MCF 10A (cell line): ENCODE measurements at regions of chr18 and their contacts with region 1.

Region 1: DNA sequence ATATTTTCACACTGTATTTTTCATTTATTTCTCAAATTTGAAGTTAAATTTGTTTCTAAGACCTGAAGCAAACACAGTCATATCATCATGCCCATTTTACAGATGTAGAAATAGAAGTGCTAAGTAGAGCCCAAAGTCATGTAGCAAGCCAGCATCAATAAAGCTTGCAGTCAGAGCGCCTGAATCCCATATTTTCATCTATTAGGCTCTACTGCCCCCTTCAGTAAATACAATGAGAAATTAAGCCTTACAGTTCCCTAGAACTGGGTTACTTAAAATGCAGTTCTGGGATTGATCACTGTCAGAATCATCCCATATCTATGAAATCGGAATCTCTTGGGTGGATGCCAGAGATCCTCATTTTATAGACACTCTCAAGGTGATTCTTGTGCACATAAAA is 419.9 kb downstream of the TGIF1 start:
- DNase-seq: peak; percentile 68
- H3K4me3 Mint-ChIP-seq: no peak overlapping the region
- H3K27ac Mint-ChIP-seq: no peak overlapping the region
- H3K4me1 Mint-ChIP-seq: no peaks in the 10 kb centered on the region
- H3K27me3 Mint-ChIP-seq: peaks cover 21% of the 10 kb centered on the region
- CTCF ChIP-seq: peak; percentile 65

Region 2: GRCh38 chr18:3281456-3282400 is 588.1 kb before region 1 on chr18:
- CTCF ChIA-PET with region 1: interaction called, 3 read pairs
- POLR2A ChIA-PET with region 1: no interaction called
- intact Hi-C with region 1: loop called (anchors 1 kb)
- DNase-seq: peak; percentile 80
- H3K4me3 Mint-ChIP-seq: no peak overlapping the region
- H3K27ac Mint-ChIP-seq: no peak overlapping the region
- H3K4me1 Mint-ChIP-seq: peaks cover 6% of the 10 kb centered on the region
- H3K27me3 Mint-ChIP-seq: no peaks in the 10 kb centered on the region
- CTCF ChIP-seq: peak; percentile 52

Region 3: GRCh38 chr18:3652380-3653262 is 217.2 kb before region 1 on chr18:
- CTCF ChIA-PET with region 1: no interaction called
- POLR2A ChIA-PET with region 1: no interaction called
- intact Hi-C with region 1: no loop called
- DNase-seq: peak; percentile 99
- H3K4me3 Mint-ChIP-seq: peak overlapping the region; percentile 4
- H3K27ac Mint-ChIP-seq: peak overlapping the region; percentile 91
- H3K4me1 Mint-ChIP-seq: peaks cover 41% of the 10 kb centered on the region
- H3K27me3 Mint-ChIP-seq: no peaks in the 10 kb centered on the region
- CTCF ChIP-seq: peak; percentile 13

Region 4: GRCh38 chr18:3703732-3704176 is 166.1 kb before region 1 on chr18:
- CTCF ChIA-PET with region 1: interaction called, 99 read pairs
- POLR2A ChIA-PET with region 1: interaction called, 3 read pairs
- intact Hi-C with region 1: loop called (anchors 1 kb)
- DNase-seq: peak; percentile 66
- H3K4me3 Mint-ChIP-seq: no peak overlapping the region
- H3K27ac Mint-ChIP-seq: no peak overlapping the region
- H3K4me1 Mint-ChIP-seq: peaks cover 9% of the 10 kb centered on the region
- H3K27me3 Mint-ChIP-seq: no peaks in the 10 kb centered on the region
- CTCF ChIP-seq: peak; percentile 61

Region 5: GRCh38 chr18:3709205-3709604 is 160.6 kb before region 1 on chr18:
- CTCF ChIA-PET with region 1: interaction called, 99 read pairs
- POLR2A ChIA-PET with region 1: interaction called, 4 read pairs
- intact Hi-C with region 1: no loop called
- DNase-seq: no peak
- H3K4me3 Mint-ChIP-seq: no peak overlapping the region
- H3K27ac Mint-ChIP-seq: no peak overlapping the region
- H3K4me1 Mint-ChIP-seq: peaks cover 8% of the 10 kb centered on the region
- H3K27me3 Mint-ChIP-seq: no peaks in the 10 kb centered on the region
- CTCF ChIP-seq: no peak

Region 6: GRCh38 chr18:3885209-3885792 is 15.5 kb after region 1 on chr18:
- CTCF ChIA-PET with region 1: interaction called, 15 read pairs
- POLR2A ChIA-PET with region 1: no interaction called
- intact Hi-C with region 1: no loop called
- DNase-seq: peak; percentile 24
- H3K4me3 Mint-ChIP-seq: no peak overlapping the region
- H3K27ac Mint-ChIP-seq: no peak overlapping the region
- H3K4me1 Mint-ChIP-seq: peaks cover 5% of the 10 kb centered on the region
- H3K27me3 Mint-ChIP-seq: no peaks in the 10 kb centered on the region
- CTCF ChIP-seq: peak; percentile 31

Region 7: DNA sequence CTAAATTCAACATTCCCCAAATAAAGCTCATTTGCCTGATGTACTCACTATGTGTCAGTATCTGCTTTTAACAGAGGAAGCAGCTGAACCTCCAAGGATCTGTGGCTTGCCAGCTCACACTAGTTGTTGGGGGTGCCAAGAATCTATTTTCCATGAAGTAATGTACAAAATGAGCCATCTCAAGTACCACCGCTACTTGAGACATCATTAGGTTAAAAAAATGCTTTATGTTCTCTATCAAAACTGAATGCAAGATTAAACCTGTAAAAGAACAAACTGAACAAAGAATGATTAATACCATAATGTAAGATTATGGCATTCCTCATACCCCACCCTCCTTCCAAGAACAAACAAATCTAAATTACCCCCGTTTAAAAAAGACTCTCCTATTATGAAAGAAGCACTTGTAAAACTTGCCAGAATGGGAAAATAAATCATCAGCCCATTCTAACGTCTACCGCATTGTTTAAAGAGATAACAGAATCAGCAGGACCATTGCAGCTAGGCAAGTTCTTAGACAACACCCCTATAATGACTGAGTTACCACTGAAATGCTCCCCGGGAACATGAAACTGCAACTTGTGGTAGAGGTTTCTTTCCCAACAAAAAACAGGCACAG is 113.6 kb after region 1 on chr18:
- CTCF ChIA-PET with region 1: interaction called, 10 read pairs
- POLR2A ChIA-PET with region 1: interaction called, 3 read pairs
- intact Hi-C with region 1: no loop called
- DNase-seq: peak; percentile 59
- H3K4me3 Mint-ChIP-seq: no peak overlapping the region
- H3K27ac Mint-ChIP-seq: peak overlapping the region; percentile 14
- H3K4me1 Mint-ChIP-seq: peaks cover 21% of the 10 kb centered on the region
- H3K27me3 Mint-ChIP-seq: no peaks in the 10 kb centered on the region
- CTCF ChIP-seq: no peak

Region 8: DNA sequence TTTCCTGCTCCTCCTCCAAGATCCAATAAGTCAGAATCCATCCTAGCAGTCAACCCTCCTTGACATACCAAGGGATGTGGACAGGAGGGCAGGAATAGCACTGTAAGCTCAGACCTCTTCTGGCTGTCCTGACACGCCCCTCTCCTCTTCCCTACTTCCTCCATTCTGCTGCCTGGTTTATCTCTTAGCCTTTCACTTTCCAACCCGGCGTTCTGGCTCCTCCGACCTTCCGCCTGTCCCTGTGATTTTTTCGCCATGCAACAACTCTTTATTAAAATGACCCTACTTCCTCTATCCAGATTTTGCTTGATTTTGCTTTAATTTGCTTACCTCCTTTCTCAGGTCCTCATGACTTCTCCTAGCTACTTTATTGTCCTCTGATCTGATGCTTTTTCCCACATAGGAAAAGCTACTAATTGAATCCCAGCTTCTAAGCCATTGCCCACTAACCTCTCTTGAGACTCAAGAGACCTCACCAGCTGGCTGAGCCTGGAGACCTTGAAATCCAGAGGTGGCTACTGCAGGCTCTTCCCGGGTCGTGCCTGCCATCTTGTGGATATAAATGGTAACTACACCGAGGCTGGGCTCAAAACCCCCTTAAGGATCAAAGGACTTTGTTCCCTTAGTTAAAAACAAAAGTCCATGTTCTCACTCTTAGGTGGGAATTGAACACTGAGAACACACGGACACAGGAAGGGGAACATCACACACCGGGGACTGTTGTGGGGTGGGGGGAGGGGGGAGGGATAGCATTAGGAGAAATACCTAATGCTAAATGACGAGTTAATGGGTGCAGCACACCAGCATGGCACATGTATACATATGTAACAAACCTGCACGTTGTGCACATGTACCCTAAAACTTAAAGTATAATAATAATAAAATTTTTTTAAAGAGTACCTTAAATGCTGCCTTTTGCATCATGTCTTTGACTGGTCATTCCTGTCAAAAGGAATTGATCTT is 1187.8 kb after region 1 on chr18:
- CTCF ChIA-PET with region 1: no interaction called
- POLR2A ChIA-PET with region 1: no interaction called
- intact Hi-C with region 1: loop called (anchors 10 kb)
- DNase-seq: peak; percentile 0
- H3K4me3 Mint-ChIP-seq: no peak overlapping the region
- H3K27ac Mint-ChIP-seq: no peak overlapping the region
- H3K4me1 Mint-ChIP-seq: peaks cover 5% of the 10 kb centered on the region
- H3K27me3 Mint-ChIP-seq: no peaks in the 10 kb centered on the region
- CTCF ChIP-seq: peak; percentile 87